ENCODE measurements at regions of chr6 and their contacts with region 1.

Region 1: GRCh38 chr6:39166189-39166911 is 51.4 kb upstream of the SAYSD1 start:
- DNase-seq: no peak
- H3K4me3 ChIP-seq: no peak overlapping the region
- H3K27ac ChIP-seq: no peak overlapping the region
- H3K4me1 ChIP-seq: peaks cover 0 to 26% (median 0%) of the 10 kb centered on the region in 3 donors
- H3K27me3 ChIP-seq: peaks cover 0 to 11% (median 0%) of the 10 kb centered on the region in 4 donors
- CTCF ChIP-seq: peak; percentile 65 to 91 (median 88)
- POLR2A ChIP-seq: no peak

Region 2: DNA sequence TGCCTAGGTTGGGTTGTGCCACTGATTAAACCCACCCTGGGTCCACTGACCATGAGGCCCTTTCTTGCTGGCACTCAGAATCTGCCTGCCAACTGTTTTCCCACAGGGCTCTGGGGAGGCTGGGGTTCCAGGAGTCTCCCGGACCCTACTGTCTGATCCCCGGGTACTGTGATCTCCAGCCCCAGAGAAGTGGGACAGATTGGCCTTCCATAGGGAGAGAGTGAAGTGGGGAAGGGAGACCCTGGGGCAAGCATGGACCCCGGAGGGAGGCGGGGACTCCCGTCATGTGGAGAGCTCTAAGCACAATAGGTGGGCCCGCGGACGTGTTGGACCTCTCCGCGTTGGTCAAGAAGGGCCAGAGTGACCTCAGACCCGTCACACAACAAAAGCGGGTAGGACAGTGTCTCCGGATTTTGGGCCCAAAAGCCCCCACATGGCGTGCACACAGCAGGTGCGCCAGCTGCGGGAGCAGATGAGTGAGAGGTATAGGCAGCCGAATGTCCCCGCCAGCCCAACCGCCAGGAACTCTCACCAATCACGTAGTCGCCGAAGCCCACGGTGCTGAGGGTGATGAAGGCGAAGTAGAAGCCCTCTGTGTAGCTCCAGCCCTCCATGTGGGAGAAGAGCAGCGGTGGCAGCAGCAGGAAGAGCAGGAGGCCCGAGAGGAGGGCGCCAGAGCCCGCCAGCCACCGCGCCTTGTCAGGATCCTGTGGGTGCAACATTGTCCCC is 137.2 kb after region 1 on chr6:
- intact Hi-C with region 1: loop called (anchors 2 kb)
- DNase-seq: no peak
- H3K4me3 ChIP-seq: no peak overlapping the region
- H3K27ac ChIP-seq: no peak overlapping the region
- H3K4me1 ChIP-seq: peaks cover 0 to 7% (median 4%) of the 10 kb centered on the region in 3 donors
- H3K27me3 ChIP-seq: peaks cover 0 to 4% (median 0%) of the 10 kb centered on the region in 4 donors
- CTCF ChIP-seq: no peak
- POLR2A ChIP-seq: no peak